ENCODE measurements at regions of chr5 and their contacts with region 1.

Region 1: DNA sequence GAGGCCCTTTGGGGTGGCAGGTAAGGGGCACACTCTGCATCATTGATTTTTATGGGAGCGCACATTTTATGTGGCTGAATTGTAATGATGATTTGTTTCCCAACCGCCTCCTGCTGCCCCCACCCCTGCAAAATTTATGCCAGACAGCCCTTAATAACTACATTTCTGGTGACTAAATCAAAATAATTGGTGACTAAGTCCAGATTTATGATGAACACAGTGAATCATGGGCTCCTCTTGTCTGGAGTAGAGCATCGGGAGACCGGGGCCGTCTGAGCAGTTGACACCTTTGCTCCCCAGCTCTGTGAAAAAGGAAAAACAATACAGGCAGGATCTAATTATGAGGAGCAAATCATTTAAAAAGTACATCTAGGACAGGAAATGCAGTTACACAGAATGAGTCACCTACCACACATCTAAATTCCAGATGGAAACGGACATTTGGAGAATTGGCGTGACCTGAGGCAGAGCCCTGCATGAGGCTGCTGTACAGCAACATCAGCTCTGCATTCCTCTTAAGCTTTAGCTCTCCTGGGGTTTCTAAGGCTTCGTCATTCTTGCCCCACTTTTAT is 58.9 kb downstream of the DOCK2 start:
- DNase-seq: peak; percentile 96
- ATAC-seq: peak; percentile 87
- H3K4me3 ChIP-seq: peak overlapping the region; percentile 32; the same call in 1 of the 2 replicates
- H3K27ac ChIP-seq: peak overlapping the region; percentile 82
- H3K4me1 ChIP-seq: peaks cover 28% of the 10 kb centered on the region
- H3K27me3 ChIP-seq: no peaks in the 10 kb centered on the region
- CTCF ChIP-seq: no peak

Region 2: GRCh38 chr5:169591636-169592035 is 104.4 kb before region 1 on chr5:
- CTCF ChIA-PET with region 1: no interaction called
- POLR2A ChIA-PET with region 1: interaction called, 5 read pairs
- intact Hi-C with region 1: loop called (anchors 1 kb)
- DNase-seq: peak; percentile 60
- ATAC-seq: peak; percentile 48
- H3K4me3 ChIP-seq: no peak overlapping the region
- H3K27ac ChIP-seq: peak overlapping the region; percentile 93
- H3K4me1 ChIP-seq: peaks cover 47% of the 10 kb centered on the region
- H3K27me3 ChIP-seq: no peaks in the 10 kb centered on the region
- CTCF ChIP-seq: no peak

Region 3: GRCh38 chr5:169668732-169669131 is 27.3 kb before region 1 on chr5:
- CTCF ChIA-PET with region 1: interaction called, 5 read pairs
- POLR2A ChIA-PET with region 1: no interaction called
- intact Hi-C with region 1: loop called (anchors 2 kb)
- DNase-seq: peak; percentile 33
- ATAC-seq: peak; percentile 77
- H3K4me3 ChIP-seq: peak overlapping the region; percentile 7; the same call in 1 of the 2 replicates
- H3K27ac ChIP-seq: peak overlapping the region; percentile 45
- H3K4me1 ChIP-seq: peaks cover 15% of the 10 kb centered on the region
- H3K27me3 ChIP-seq: no peaks in the 10 kb centered on the region
- CTCF ChIP-seq: peak; percentile 28; the same call in 1 of the 2 replicates

Region 4: GRCh38 chr5:169742771-169743296 is 46.8 kb after region 1 on chr5:
- CTCF ChIA-PET with region 1: interaction called, 4 read pairs
- POLR2A ChIA-PET with region 1: no interaction called
- intact Hi-C with region 1: loop called (anchors 2 kb)
- DNase-seq: peak; percentile 88
- ATAC-seq: peak; percentile 87
- H3K4me3 ChIP-seq: peak overlapping the region; percentile 20; the same call in 1 of the 2 replicates
- H3K27ac ChIP-seq: peak overlapping the region; percentile 83
- H3K4me1 ChIP-seq: peaks cover 42% of the 10 kb centered on the region
- H3K27me3 ChIP-seq: no peaks in the 10 kb centered on the region
- CTCF ChIP-seq: no peak

Region 5: GRCh38 chr5:169880012-169880663 is 184.1 kb after region 1 on chr5:
- CTCF ChIA-PET with region 1: no interaction called
- POLR2A ChIA-PET with region 1: no interaction called
- intact Hi-C with region 1: no loop called
- DNase-seq: no peak
- ATAC-seq: no peak
- H3K4me3 ChIP-seq: no peak overlapping the region
- H3K27ac ChIP-seq: no peak overlapping the region
- H3K4me1 ChIP-seq: peaks cover 9% of the 10 kb centered on the region; the same call in 1 of the 2 replicates
- H3K27me3 ChIP-seq: no peaks in the 10 kb centered on the region
- CTCF ChIP-seq: no peak